ENCODE measurements at regions of chr7 and their contacts with region 1.

Region 1: GRCh38 chr7:123580406-123581161 is 21.0 kb upstream of the ASB15 start:
- DNase-seq: peak; percentile 41
- H3K4me3 ChIP-seq: peak overlapping the region in 1 of 3 experiments; percentile 27
- H3K27ac ChIP-seq: no peak overlapping the region
- H3K4me1 ChIP-seq: peaks cover 6% of the 10 kb centered on the region
- H3K27me3 ChIP-seq: no peaks in the 10 kb centered on the region
- CTCF ChIP-seq: peak; percentile 87 to 93

Region 2: DNA sequence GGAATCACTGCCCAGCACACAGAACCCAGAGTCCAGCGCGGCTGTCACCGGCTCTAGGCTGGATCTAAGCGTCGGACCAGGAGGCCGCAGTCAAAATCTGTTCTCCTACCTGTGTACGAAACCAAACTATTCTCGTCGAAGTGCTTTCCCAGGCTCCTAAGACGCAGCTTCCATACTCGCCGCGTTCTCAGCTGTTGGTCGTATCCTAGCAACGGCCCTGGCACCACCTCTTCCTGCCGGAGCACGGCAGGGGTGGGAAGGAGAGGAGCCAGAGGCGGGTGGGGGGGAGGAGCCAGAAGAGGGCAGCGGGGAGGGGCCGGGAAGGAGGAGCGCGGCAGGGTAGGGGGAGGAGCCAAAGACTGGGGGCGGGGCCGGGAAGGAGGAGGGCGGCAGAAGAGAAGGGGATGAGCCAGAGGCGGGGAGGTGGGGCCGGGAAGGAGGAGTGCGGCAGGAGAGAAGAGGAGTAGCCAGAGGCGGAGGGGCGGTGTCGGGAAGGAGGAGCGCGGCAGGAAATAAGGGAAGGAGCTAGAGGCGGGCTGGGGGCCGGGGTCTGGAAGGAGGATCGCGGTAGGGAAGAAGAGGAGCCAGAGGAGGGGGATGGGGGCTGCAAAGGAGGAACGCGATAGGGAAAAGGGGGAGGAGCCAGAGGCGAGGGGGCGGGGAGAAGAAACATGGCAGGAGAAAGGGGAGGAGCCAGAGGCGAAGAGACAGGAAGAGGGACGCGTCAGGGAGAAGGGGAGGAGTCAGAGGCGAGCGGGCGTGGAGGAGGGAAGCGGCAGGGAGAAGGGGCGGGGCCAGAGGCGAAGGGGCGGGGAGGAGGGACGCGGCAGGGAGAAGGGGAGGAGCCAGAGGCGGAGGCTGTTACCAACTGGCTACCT is 46.0 kb before region 1 on chr7 and contains the start of gene IQUB:
- CTCF ChIA-PET with region 1: interaction called, 11 read pairs
- dilution Hi-C with region 1: no loop called
- in situ Hi-C with region 1: no loop called
- intact Hi-C with region 1: no loop called
- DNase-seq: peak; percentile 93
- H3K4me3 ChIP-seq: peak within 1 kb of the TSS; percentile 59 to 85 (median 62)
- H3K27ac ChIP-seq: peak within 1 kb of the TSS; percentile 70
- H3K4me1 ChIP-seq: peaks cover 22% of the 10 kb centered on the region
- H3K27me3 ChIP-seq: no peaks in the 10 kb centered on the region
- CTCF ChIP-seq: no peak
- total RNA-seq, gene IQUB: 0.26 to 1.5 TPM

Region 3: GRCh38 chr7:123674399-123675180 is 94.0 kb after region 1 on chr7:
- CTCF ChIA-PET with region 1: no interaction called
- dilution Hi-C with region 1: no loop called
- in situ Hi-C with region 1: no loop called
- intact Hi-C with region 1: loop called (anchors 2 kb)
- DNase-seq: peak; percentile 82
- H3K4me3 ChIP-seq: peak overlapping the region in 1 of 3 experiments; percentile 22
- H3K27ac ChIP-seq: peak overlapping the region; percentile 84
- H3K4me1 ChIP-seq: peaks cover 27% of the 10 kb centered on the region
- H3K27me3 ChIP-seq: no peaks in the 10 kb centered on the region
- CTCF ChIP-seq: no peak

Region 4: GRCh38 chr7:123705211-123705901 is 124.8 kb after region 1 on chr7:
- CTCF ChIA-PET with region 1: no interaction called
- dilution Hi-C with region 1: no loop called
- in situ Hi-C with region 1: no loop called
- intact Hi-C with region 1: loop called (anchors 1 kb)
- DNase-seq: no peak
- H3K4me3 ChIP-seq: no peak overlapping the region
- H3K27ac ChIP-seq: no peak overlapping the region
- H3K4me1 ChIP-seq: no peaks in the 10 kb centered on the region
- H3K27me3 ChIP-seq: no peaks in the 10 kb centered on the region
- CTCF ChIP-seq: no peak

Region 5: DNA sequence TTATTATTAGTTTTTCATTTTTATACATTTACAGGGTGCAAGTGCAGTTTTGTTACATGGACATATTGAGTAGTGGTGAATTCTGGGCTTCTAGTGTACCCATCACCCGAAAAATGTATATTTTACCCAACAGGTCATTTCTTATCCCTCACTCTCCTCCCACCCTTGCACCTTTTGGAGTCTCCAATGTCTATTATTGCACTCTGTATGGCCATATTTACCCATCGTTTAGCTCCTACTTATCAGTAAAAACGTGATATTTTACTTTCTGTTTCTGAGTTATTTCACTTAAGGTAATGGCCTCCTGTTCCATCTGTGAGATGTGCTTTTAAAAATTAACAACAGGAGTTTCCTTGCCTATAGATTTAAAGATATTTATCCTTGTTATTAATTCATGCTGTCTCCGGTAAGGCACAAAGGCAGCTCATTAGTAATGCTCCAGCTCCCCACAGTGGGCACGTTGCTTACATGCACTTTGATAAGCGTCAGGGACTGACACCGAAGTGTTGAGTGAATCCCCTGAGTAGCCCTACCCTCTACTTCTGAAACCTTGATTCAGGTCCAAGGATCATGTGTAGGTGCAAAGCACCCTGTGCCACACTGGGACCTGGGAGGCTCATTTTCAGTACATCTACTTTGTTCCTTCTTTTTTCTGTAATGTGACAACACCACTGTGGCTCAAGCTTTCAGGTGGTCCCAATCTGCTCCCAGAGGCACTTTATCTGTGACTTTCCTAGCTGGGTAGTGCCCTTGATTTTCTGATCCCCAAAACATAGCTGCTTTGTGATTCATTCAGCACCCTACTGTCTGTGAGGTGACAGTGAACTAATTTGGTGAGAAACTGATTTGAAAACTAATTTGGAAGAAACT is 291.6 kb after region 1 on chr7:
- CTCF ChIA-PET with region 1: no interaction called
- dilution Hi-C with region 1: no loop called
- in situ Hi-C with region 1: no loop called
- intact Hi-C with region 1: loop called (anchors 2 kb)
- DNase-seq: peak; percentile 45
- H3K4me3 ChIP-seq: no peak overlapping the region
- H3K27ac ChIP-seq: no peak overlapping the region
- H3K4me1 ChIP-seq: no peaks in the 10 kb centered on the region
- H3K27me3 ChIP-seq: no peaks in the 10 kb centered on the region
- CTCF ChIP-seq: peak; percentile 73 to 76